ENCODE measurements at regions of chr2 and their contacts with region 1.

Region 1: GRCh38 chr2:204145263-204145751 is 208.7 kb downstream of the ICOS start:
- DNase-seq: peak; percentile 89
- ATAC-seq: peak; percentile 97
- H3K4me3 Mint-ChIP-seq: peak overlapping the region; percentile 65
- H3K27ac Mint-ChIP-seq: peak overlapping the region; percentile 68
- H3K4me1 Mint-ChIP-seq: peaks cover 10% of the 10 kb centered on the region
- H3K27me3 Mint-ChIP-seq: peaks cover 13% of the 10 kb centered on the region

Region 2: DNA sequence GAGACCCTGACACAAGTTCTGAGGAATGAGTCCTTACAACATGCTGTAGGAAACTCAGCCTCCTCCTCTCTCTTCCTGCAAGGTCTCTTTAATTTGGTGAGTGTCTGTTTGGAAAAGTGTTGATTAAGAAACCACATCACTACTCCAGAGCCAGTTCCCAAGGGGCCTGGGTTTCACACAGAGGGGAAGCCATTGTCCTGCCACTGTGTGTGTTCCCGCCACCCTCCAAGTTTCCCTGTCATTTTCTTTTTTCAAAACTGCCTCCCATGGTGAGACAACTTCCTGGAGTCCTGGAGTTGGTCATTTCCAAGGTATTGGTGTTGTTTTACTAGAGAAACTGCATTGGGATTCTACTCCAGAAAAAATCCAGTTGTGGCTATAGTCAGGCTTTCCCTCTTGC is 167.9 kb after region 1 on chr2:
- CTCF ChIA-PET with region 1: no interaction called
- POLR2A ChIA-PET with region 1: no interaction called
- intact Hi-C with region 1: loop called in 1 of 2 experiments (anchors 5 kb)
- DNase-seq: no peak
- ATAC-seq: no peak
- H3K4me3 Mint-ChIP-seq: no peak overlapping the region
- H3K27ac Mint-ChIP-seq: no peak overlapping the region
- H3K4me1 Mint-ChIP-seq: no peaks in the 10 kb centered on the region
- H3K27me3 Mint-ChIP-seq: peaks cover 11% of the 10 kb centered on the region

Region 3: DNA sequence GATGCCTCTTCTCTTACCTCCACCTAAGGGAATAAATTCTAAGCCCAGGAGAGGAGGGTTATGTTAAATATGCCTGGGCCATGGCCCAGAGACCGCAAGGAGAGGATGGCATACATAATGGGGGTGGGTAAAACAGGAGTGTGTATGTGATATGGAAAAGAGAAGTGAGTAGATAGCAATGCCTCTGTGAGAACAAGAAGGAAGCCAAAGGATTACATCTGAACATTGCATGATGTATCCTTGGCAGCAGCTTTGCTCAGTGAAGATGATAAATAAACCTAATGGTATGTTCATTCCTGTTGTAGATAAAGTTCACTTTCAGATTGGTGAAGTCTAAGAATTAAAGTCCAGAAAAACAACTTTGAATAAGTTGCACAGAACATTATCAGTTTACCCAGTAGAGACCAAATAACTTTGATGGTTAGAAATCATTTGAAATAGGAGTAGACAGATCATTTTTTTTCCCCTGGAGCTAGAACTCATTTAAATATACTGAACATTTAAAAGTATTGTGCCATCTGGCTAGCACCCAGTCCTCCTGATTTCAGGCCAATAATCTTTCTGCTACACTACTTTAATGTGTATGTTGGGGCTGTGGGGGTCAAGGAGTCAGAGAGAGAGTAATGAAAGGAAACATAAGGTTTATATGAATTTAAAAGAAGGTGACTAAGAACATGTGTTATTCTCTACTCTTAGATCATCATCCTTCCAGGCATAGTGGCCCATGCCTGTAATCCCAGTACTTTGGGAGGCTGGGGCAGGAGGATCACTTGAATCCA is 631.7 kb after region 1 on chr2:
- CTCF ChIA-PET with region 1: no interaction called
- POLR2A ChIA-PET with region 1: no interaction called
- intact Hi-C with region 1: no loop called
- DNase-seq: no peak
- ATAC-seq: no peak
- H3K4me3 Mint-ChIP-seq: no peak overlapping the region
- H3K27ac Mint-ChIP-seq: no peak overlapping the region
- H3K4me1 Mint-ChIP-seq: no peaks in the 10 kb centered on the region
- H3K27me3 Mint-ChIP-seq: peaks cover 2% of the 10 kb centered on the region

Measured in activated CD4-positive, alpha-beta T cell treated with anti-CD3 and anti-CD28 coated beads for 36 hours (primary cell).